ENCODE measurements at regions of chr10 and their contacts with region 1.

Region 1: GRCh38 chr10:27742195-27743011 is 3.2 kb downstream of the MKX start:
- DNase-seq: peak in 1 of 2 donors; percentile 93
- H3K4me3 ChIP-seq: peak overlapping the region; percentile 50 to 78
- H3K27ac ChIP-seq: peak overlapping the region; percentile 92 to 98
- H3K4me1 ChIP-seq: peaks cover 0 to 9% of the 10 kb centered on the region in 2 donors
- H3K27me3 ChIP-seq: no peaks in the 10 kb centered on the region
- CTCF ChIP-seq: peak; percentile 86 to 90 (median 90)

Region 2: GRCh38 chr10:26909746-26910145 is 832.7 kb before region 1 on chr10:
- intact Hi-C with region 1: no loop called
- DNase-seq: no peak
- H3K4me3 ChIP-seq: no peak overlapping the region
- H3K27ac ChIP-seq: no peak overlapping the region
- H3K4me1 ChIP-seq: no peaks in the 10 kb centered on the region
- H3K27me3 ChIP-seq: no peaks in the 10 kb centered on the region
- CTCF ChIP-seq: no peak

Region 3: GRCh38 chr10:27558612-27559020 is 183.8 kb before region 1 on chr10:
- intact Hi-C with region 1: loop called (anchors 2 kb)
- DNase-seq: peak in 1 of 2 donors; percentile 67
- H3K4me3 ChIP-seq: no peak overlapping the region
- H3K27ac ChIP-seq: no peak overlapping the region
- H3K4me1 ChIP-seq: no peaks in the 10 kb centered on the region
- H3K27me3 ChIP-seq: no peaks in the 10 kb centered on the region
- CTCF ChIP-seq: peak; percentile 75 to 86 (median 77)

Region 4: DNA sequence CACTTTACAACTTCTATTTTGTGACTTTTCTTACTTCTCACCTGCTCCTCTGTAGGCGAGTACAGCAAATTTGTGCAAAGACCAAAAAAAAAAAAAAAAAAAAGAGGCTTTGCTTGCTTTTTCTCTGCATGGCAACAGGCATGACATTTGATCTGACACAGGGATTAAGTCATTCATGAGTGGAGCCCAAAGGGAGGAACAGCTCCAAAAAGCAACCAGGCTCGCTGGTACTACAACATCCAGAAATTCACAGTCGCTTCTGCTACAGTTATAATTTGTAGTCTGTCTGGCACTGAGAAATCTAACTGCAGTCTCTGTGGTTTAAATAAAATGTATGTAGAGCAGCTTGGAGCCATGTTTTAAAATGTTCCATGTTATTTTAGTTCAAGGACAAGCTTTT is 28.5 kb before region 1 on chr10:
- intact Hi-C with region 1: loop called (anchors 2 kb)
- DNase-seq: peak in 1 of 2 donors; percentile 78
- H3K4me3 ChIP-seq: peak overlapping the region; percentile 48 to 52
- H3K27ac ChIP-seq: peak overlapping the region; percentile 81 to 85
- H3K4me1 ChIP-seq: peaks cover 5 to 24% of the 10 kb centered on the region in 2 donors
- H3K27me3 ChIP-seq: no peaks in the 10 kb centered on the region
- CTCF ChIP-seq: no peak

Region 5: GRCh38 chr10:28179006-28179742 is 436.8 kb after region 1 on chr10:
- intact Hi-C with region 1: loop called (anchors 2 kb)
- DNase-seq: no peak
- H3K4me3 ChIP-seq: peak overlapping the region in 1 of 2 donors; percentile 53
- H3K27ac ChIP-seq: peak overlapping the region in 1 of 2 donors; percentile 60
- H3K4me1 ChIP-seq: peaks cover 5 to 12% of the 10 kb centered on the region in 2 donors
- H3K27me3 ChIP-seq: no peaks in the 10 kb centered on the region
- CTCF ChIP-seq: peak; percentile 48 to 72 (median 61)

Region 6: GRCh38 chr10:28302638-28303488 is 560.5 kb after region 1 on chr10 and contains the start of gene MPP7:
- intact Hi-C with region 1: loop called (anchors 2 kb)
- DNase-seq: peak; percentile 93 to 99
- H3K4me3 ChIP-seq: peak within 1 kb of the TSS; percentile 81 to 90
- H3K27ac ChIP-seq: peak within 1 kb of the TSS; percentile 94 to 96
- H3K4me1 ChIP-seq: peaks cover 0 to 8% of the 10 kb centered on the region in 2 donors
- H3K27me3 ChIP-seq: no peaks in the 10 kb centered on the region
- CTCF ChIP-seq: peak in 2 of 3 experiments; percentile 46 to 55
- total RNA-seq, gene MPP7: 43.9 TPM